ENCODE measurements at regions of chr20 and their contacts with region 1.

Region 1: GRCh38 chr20:37384683-37385174 is 38.8 kb downstream of the SRC start:
- DNase-seq: peak; percentile 63
- H3K4me3 Mint-ChIP-seq: no peak overlapping the region
- H3K27ac Mint-ChIP-seq: peak overlapping the region; percentile 72
- H3K4me1 Mint-ChIP-seq: peaks cover 54% of the 10 kb centered on the region
- H3K27me3 Mint-ChIP-seq: no peaks in the 10 kb centered on the region
- CTCF ChIP-seq: peak; percentile 96

Region 2: GRCh38 chr20:37265152-37265551 is 119.6 kb before region 1 on chr20:
- CTCF ChIA-PET with region 1: no interaction called
- intact Hi-C with region 1: loop called (anchors 5 kb)
- DNase-seq: no peak
- H3K4me3 Mint-ChIP-seq: no peak overlapping the region
- H3K27ac Mint-ChIP-seq: no peak overlapping the region
- H3K4me1 Mint-ChIP-seq: peaks cover 10% of the 10 kb centered on the region
- H3K27me3 Mint-ChIP-seq: peaks cover 46% of the 10 kb centered on the region
- CTCF ChIP-seq: no peak

Region 3: GRCh38 chr20:37294262-37294981 is 90.3 kb before region 1 on chr20:
- CTCF ChIA-PET with region 1: interaction called, 3 read pairs
- intact Hi-C with region 1: loop called (anchors 5 kb)
- DNase-seq: no peak
- H3K4me3 Mint-ChIP-seq: no peak overlapping the region
- H3K27ac Mint-ChIP-seq: peak overlapping the region; percentile 1
- H3K4me1 Mint-ChIP-seq: peaks cover 40% of the 10 kb centered on the region
- H3K27me3 Mint-ChIP-seq: no peaks in the 10 kb centered on the region
- CTCF ChIP-seq: no peak

Region 4: GRCh38 chr20:37439223-37439933 is 54.6 kb after region 1 on chr20:
- CTCF ChIA-PET with region 1: no interaction called
- intact Hi-C with region 1: no loop called
- DNase-seq: no peak
- H3K4me3 Mint-ChIP-seq: no peak overlapping the region
- H3K27ac Mint-ChIP-seq: no peak overlapping the region
- H3K4me1 Mint-ChIP-seq: no peaks in the 10 kb centered on the region
- H3K27me3 Mint-ChIP-seq: no peaks in the 10 kb centered on the region
- CTCF ChIP-seq: no peak